Stomach (tissue), 19 donors: ENCODE measurements at regions of chr12 and their contacts with region 1.

Region 1: DNA sequence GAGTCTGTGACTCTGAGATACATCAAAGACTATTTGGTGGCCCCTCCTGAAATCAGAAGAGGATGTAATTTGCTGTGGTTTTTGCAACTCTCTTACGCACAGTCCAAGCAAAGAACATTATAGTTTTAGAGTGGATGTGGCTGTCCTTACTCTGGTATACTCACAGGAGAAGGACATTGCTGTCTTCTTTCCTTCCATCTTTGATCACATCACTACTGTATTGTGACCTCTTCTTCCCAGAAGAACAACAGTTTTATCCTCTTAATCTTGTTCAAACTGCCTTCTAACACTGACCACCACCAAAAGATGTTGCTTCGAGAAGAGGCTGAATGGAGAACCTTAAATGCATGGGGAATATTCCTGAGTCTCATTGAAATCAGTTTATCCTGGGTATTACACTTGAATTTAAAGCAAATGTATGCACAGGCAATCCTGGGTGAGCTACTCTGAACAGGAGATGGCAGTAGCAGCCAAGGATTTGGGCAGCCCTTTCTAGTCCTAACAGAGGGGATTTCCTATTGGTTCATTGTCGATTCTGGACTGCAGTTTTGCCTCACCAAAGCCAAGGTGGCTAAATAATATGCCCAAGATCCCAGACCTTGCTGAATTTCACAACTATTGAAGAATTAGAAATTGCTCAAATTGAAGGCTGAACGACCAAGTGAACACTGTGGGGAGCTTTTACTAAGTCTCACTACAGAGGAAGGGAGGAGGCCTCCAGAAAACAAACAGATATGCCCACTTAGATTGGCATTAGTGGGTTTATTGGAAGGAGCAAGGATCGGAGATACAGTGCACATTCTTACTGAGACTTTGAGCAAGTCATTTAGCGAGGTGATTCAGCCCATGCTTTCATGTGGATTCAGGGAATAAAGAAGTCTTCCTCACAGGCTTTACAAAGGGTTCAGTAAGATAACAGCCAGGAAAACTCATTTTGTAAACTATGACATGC is 282.8 kb downstream of the PAWR start:
- DNase-seq: peak; percentile 57 to 89
- H3K4me3 ChIP-seq: no peak overlapping the region
- H3K27ac ChIP-seq: no peak overlapping the region
- H3K4me1 ChIP-seq: peaks cover 0 to 13% (median 4%) of the 10 kb centered on the region in 4 donors
- H3K27me3 ChIP-seq: no peaks in the 10 kb centered on the region
- CTCF ChIP-seq: peak in 5 of 7 experiments; percentile 41 to 83 (median 48)
- EP300 ChIP-seq: no peak
- POLR2A ChIP-seq: no peak

Region 2: DNA sequence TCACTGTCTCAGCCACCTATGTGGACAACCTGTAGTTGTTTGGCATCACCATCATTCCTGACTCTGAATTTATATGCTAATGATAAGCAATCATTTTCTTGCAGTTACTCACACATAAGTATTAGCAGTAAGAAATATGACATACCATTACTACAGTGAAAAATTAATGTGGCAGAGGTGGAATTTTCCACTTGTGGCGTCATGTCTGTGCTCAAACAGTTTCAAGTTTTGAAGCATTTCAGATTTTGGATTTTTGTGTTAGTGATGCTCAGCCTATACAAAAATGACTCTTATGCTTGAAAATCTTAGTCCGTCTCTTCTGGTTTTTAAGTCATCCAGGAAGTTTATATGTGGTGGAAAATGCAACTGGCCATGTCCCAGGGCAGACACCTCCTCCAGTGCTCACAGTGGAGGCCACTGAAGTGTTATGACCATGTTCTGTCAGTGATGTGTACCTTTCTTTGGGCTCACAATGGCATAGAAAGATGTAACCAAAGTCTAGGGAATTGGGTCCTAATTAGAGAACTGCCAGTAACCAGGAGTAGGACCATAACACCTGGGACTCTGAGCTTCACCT is 322.8 kb before region 1 on chr12:
- intact Hi-C with region 1: no loop called
- DNase-seq: no peak
- H3K4me3 ChIP-seq: no peak overlapping the region
- H3K27ac ChIP-seq: no peak overlapping the region
- H3K4me1 ChIP-seq: no peaks in the 10 kb centered on the region
- H3K27me3 ChIP-seq: no peaks in the 10 kb centered on the region
- CTCF ChIP-seq: no peak
- EP300 ChIP-seq: no peak
- POLR2A ChIP-seq: no peak

Region 3: DNA sequence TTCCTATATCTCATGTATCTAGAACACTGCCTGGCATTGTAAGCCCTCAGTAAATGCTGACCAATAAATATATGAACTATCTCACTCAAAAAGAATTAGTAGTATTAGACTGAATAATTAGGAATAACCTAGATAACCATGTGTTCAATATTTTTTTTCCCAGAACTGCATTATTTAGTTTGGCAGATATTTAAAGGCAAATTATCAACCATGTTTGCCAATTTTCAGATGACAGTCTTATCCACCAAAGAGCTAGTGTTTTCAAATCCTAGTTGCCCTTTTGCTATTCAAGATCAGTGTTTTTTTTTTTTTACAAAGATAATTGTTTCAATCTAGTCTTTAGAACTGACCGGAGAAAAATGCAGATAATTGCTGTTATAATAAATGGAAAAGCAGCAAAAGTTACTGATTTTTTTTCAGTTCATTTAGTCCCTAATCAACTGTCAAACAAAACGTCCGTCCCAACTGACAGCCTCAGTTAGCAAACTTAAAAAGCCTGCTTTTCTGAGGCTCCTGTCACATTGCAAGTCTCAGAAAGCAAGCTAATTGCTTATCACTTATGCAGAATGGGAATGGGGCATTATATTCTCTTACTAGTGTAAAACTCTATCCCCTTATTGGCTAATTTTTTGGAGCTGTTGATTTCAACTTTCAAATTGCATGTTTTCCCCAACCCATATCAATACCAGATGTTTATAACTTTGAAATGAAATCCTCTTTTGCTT is 79.6 kb after region 1 on chr12:
- intact Hi-C with region 1: no loop called
- DNase-seq: no peak
- H3K4me3 ChIP-seq: no peak overlapping the region
- H3K27ac ChIP-seq: no peak overlapping the region
- H3K4me1 ChIP-seq: no peaks in the 10 kb centered on the region
- H3K27me3 ChIP-seq: no peaks in the 10 kb centered on the region
- CTCF ChIP-seq: no peak
- EP300 ChIP-seq: no peak
- POLR2A ChIP-seq: no peak

Region 4: DNA sequence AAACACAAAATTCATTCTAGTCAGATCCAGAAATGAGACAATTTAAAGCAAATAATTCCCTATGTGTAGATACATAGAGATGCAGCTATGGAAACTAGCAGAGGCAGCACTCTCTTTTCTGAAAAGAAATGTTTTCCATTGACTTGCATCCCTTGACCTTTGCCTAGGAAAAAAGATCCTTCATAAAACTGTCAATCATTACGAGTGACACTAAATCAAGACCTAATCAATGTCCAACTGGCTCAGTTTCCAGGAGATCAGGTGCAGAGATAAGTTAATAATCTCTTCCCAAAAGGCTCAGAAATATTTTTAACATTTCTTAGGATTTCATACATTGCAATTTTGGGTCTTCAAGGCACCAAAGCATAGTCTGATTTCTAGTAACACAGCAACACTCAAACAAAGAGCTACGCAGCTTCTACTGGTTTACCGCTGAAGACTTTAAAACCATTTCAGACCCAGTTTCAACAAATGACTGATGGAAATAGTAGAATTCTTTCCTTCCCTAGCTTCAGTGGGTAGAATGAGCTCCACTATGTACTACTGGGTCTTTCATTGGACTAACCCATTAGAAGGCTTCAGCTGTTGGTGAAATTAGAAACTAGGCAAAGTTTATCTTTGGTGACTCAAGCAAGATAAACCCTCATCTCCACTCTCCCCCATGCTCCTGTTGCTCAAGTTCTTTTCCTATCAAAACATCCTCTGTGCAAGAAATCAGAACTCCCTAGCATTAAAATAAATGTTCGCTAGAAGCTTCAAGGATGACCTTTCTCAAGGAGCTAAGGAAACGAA is 123.4 kb after region 1 on chr12:
- intact Hi-C with region 1: no loop called
- DNase-seq: no peak
- H3K4me3 ChIP-seq: no peak overlapping the region
- H3K27ac ChIP-seq: no peak overlapping the region
- H3K4me1 ChIP-seq: no peaks in the 10 kb centered on the region
- H3K27me3 ChIP-seq: no peaks in the 10 kb centered on the region
- CTCF ChIP-seq: no peak
- EP300 ChIP-seq: no peak
- POLR2A ChIP-seq: no peak

Region 5: DNA sequence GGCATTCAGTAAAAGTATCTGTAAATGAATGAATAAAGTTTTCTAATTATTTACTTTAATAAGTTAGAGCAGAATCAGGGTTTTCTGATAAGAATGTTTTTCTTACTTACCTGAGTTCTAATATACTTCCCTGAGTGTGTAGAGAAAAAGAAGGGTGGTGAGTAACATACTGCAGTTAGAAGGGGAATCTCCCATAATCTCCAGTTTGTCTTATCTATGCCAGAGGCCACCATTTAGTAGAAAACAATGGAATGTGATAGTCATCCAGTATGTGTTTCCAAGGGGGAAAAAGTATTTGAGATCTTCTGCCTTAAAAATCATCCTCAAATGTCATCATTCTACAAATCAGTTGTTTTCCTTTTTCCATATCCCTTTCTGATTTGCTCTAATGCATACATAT is 339.3 kb after region 1 on chr12:
- intact Hi-C with region 1: loop called (anchors 10 kb)
- DNase-seq: no peak
- H3K4me3 ChIP-seq: no peak overlapping the region
- H3K27ac ChIP-seq: no peak overlapping the region
- H3K4me1 ChIP-seq: no peaks in the 10 kb centered on the region
- H3K27me3 ChIP-seq: no peaks in the 10 kb centered on the region
- CTCF ChIP-seq: no peak
- EP300 ChIP-seq: no peak
- POLR2A ChIP-seq: no peak